Posterior cingulate gyrus (tissue), 11 donors: ENCODE measurements at regions of chr20 and their contacts with region 1.

Region 1: DNA sequence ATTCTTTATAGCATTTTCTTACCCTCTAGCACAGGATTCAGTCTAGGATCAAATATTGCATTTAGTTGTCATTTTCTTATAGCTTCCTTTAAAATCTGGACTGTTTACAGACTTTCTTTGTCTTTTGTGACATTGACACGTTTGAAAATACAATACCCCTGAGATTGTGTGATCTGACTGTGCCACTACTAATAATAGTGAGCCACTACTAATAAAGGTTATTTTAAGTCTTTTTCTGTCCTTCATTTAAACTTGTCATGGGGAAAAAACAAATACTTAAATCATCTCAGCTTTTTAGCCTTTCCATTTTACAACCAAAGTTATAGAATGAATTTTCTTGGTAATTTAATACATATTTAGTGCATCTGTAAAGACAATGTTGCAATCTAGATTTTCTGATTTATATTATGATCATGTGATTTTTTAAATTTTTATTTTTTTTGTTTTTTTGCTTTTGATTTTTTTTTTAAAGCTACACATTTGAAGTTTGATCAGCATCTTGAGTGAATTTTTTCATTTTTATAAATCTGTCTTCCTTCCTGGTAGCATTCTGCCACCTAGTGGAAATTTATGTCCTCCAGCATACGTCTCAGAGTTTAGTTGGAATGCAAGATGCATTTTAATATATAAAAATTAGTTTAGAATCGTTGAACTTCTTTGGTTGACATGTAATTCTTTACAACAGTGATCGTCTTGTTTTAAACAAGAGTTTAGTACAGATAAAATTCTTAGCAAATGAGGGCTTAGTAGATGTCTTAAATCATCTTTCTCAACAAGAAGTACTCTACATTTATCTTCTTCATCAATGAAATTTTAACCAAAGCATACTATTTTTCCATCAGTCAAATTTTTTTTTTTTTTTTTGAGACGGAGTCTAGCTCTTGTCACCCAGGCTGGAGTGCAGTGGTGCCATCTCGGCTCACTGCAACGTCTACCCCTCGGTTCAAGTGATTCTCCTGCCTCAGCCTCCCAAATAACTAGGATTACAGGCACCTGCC is 119.4 kb downstream of the NCOA3 start:
- DNase-seq: no peak

Region 2: GRCh38 chr20:46752728-46753127 is 868.4 kb before region 1 on chr20:
- intact Hi-C with region 1: loop called (anchors 1 kb)
- DNase-seq: peak in 8 of 10 donors; percentile 41 to 90 (median 60)

Region 3: GRCh38 chr20:47272893-47273590 is 348.1 kb before region 1 on chr20:
- intact Hi-C with region 1: loop called (anchors 10 kb)
- DNase-seq: peak in 2 of 10 donors; percentile 38 to 50

Region 4: GRCh38 chr20:47389867-47390347 is 231.2 kb before region 1 on chr20:
- intact Hi-C with region 1: loop called (anchors 10 kb)
- DNase-seq: peak in 2 of 10 donors; percentile 26 to 53

Region 5: DNA sequence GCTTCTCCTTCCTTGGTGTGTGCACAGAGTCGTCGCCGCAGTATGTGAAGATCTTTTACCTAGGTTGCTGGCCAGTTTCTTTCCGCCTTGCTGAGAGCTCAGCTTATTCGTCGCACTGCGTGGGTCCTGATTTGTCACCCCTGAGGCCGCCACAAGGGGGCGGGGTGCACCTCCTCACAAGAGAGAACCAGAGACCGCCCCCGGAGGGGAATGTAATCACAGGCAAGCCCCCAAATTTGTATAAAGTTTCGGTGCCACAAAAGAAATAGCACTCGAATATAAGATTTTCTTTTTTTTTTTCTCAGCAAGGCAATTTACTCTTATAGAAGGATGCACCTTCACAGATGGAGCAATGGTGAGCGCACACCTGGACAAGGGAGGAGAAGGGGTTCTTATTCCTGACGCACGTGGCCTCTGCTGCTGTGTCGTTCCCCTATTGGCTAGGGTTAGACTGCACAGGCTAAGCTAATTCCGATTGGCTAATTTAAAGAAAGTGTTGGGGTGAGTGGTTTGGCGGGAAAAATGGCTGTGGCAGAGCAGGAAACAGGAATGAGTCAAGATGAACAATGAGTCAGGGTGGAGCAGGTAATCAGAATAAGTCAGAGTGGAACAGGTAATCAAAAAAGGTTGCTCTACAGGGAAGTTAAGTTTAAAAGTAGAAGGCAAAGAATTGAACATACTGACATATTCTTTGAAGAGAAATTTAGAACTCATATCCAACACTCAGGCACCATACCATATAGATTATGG is 99.9 kb before region 1 on chr20:
- intact Hi-C with region 1: loop called (anchors 5 kb)
- DNase-seq: peak in 1 of 10 donors; percentile 13

Region 6: GRCh38 chr20:47686545-47686944 is 65.4 kb after region 1 on chr20:
- intact Hi-C with region 1: no loop called
- DNase-seq: peak in 1 of 10 donors; percentile 67